ENCODE measurements at regions of chr12 and their contacts with region 1.

Region 1: DNA sequence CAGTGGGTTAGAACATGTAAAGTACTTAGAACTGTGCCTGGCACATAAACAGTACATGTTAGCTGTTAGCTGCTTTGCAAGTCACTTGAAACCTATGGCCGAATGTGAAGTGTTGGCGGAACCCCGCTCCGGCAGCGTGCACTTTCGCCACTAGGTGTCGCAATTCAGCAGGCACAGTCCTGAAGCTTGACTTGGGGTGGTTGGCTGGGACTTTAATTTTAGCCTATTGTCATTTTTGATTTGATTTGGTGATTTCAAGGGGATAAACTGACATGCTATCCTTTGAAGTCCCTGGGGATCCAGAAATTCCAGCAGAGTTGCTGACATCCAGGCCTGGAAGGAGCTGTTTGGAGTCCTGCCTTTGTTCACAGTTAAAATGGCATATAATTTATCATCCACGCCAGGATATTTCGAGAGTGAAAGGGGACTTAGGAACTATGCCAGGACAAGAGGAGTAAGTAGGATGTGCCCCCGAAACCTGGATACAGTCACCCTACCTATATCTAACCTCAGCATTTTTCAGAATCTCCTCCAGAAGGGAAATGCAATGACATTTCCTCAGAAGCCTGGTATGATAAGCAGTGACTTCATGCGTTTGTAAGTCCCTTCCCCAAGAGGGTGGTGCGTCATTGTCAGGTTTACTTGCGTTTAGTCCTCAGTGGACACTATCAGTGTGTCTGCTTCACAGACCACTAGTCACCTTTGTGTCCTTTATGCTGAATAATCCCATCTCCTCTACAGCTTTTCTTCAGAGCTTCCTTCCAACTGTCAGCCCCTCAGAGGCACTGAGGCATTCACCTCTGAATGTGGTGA is 3.5 kb upstream of the TSPAN9 start:
- DNase-seq: peak; percentile 69
- H3K4me3 ChIP-seq: no peak overlapping the region
- H3K27ac ChIP-seq: no peak overlapping the region
- H3K27me3 ChIP-seq: peaks cover 2% of the 10 kb centered on the region
- CTCF ChIP-seq: peak; percentile 99

Region 2: GRCh38 chr12:3083921-3084347 is 10.3 kb after region 1 on chr12:
- CTCF ChIA-PET with region 1: interaction called, 11 read pairs
- POLR2A ChIA-PET with region 1: no interaction called
- DNase-seq: no peak
- H3K4me3 ChIP-seq: no peak overlapping the region
- H3K27ac ChIP-seq: no peak overlapping the region
- H3K27me3 ChIP-seq: no peaks in the 10 kb centered on the region
- CTCF ChIP-seq: no peak

Region 3: DNA sequence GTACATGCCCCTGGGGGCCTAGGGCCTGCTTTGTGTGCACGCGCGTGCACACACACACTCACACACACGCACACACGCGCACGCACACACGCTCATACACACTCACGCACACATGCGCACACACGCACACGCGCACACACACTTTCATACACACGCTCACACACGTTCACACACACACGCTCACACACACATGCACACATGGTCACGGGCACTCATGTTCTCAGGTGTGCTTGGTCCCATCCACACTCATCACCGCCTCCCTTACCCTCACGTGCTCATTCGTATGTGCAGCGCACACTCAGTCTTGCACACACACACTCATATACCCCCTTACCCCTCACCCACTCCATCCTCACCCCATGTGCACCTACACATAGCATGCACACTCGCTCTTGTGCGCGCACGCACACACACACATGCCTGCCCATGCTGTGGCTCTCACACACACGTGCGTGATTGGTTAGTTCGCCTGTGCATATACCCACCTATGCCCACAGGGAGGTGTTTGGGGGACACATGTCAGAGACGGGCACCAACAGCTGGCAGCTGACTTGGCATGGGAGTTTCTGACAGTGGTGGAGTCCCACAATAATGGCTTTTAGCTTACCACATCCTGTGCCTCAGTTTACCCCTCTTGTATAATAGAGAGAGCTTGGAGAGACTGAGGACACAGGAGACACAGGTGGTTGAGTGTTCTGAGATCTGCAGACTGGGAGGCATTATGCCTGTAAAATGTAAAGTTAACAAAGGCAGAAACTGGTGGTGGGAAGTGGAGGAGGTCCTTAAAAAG is 32.2 kb after region 1 on chr12:
- CTCF ChIA-PET with region 1: interaction called, 11 read pairs
- POLR2A ChIA-PET with region 1: interaction called, 4 read pairs
- DNase-seq: no peak
- H3K4me3 ChIP-seq: no peak overlapping the region
- H3K27ac ChIP-seq: no peak overlapping the region
- H3K27me3 ChIP-seq: no peaks in the 10 kb centered on the region
- CTCF ChIP-seq: no peak

Region 4: GRCh38 chr12:3129301-3130056 is 55.8 kb after region 1 on chr12:
- CTCF ChIA-PET with region 1: interaction called, 21 read pairs
- POLR2A ChIA-PET with region 1: no interaction called
- DNase-seq: no peak
- H3K4me3 ChIP-seq: no peak overlapping the region
- H3K27ac ChIP-seq: no peak overlapping the region
- H3K27me3 ChIP-seq: no peaks in the 10 kb centered on the region
- CTCF ChIP-seq: no peak

Region 5: GRCh38 chr12:3202734-3203446 is 129.2 kb after region 1 on chr12:
- CTCF ChIA-PET with region 1: interaction called, 15 read pairs
- POLR2A ChIA-PET with region 1: no interaction called
- DNase-seq: no peak
- H3K4me3 ChIP-seq: no peak overlapping the region
- H3K27ac ChIP-seq: no peak overlapping the region
- H3K27me3 ChIP-seq: no peaks in the 10 kb centered on the region
- CTCF ChIP-seq: peak; percentile 95

Region 6: GRCh38 chr12:3275171-3276041 is 201.8 kb after region 1 on chr12:
- CTCF ChIA-PET with region 1: interaction called, 187 read pairs
- POLR2A ChIA-PET with region 1: interaction called, 6 read pairs
- DNase-seq: peak; percentile 36
- H3K4me3 ChIP-seq: no peak overlapping the region
- H3K27ac ChIP-seq: no peak overlapping the region
- H3K27me3 ChIP-seq: no peaks in the 10 kb centered on the region
- CTCF ChIP-seq: peak; percentile 98